ENCODE measurements at regions of chrX and their contacts with region 1.

Region 1: GRCh38 chrX:107118322-107119147 is at the start of gene RBM41:
- DNase-seq: peak; percentile 45 to 88 (median 66)
- ATAC-seq: peak; percentile 99
- H3K4me3 ChIP-seq: peak within 1 kb of the TSS; percentile 77
- H3K4me3 Mint-ChIP-seq: peak within 1 kb of the TSS; percentile 100
- H3K27ac ChIP-seq: peak within 1 kb of the TSS; percentile 54 to 55
- H3K27ac Mint-ChIP-seq: peak within 1 kb of the TSS; percentile 91
- H3K4me1 ChIP-seq: no peaks in the 10 kb centered on the region
- H3K4me1 Mint-ChIP-seq: peaks cover 49% of the 10 kb centered on the region
- H3K27me3 ChIP-seq: no peaks in the 10 kb centered on the region
- H3K27me3 Mint-ChIP-seq: no peaks in the 10 kb centered on the region
- CTCF ChIP-seq: no peak
- total RNA-seq, gene RBM41: 5.9 to 8.2 TPM

Region 2: DNA sequence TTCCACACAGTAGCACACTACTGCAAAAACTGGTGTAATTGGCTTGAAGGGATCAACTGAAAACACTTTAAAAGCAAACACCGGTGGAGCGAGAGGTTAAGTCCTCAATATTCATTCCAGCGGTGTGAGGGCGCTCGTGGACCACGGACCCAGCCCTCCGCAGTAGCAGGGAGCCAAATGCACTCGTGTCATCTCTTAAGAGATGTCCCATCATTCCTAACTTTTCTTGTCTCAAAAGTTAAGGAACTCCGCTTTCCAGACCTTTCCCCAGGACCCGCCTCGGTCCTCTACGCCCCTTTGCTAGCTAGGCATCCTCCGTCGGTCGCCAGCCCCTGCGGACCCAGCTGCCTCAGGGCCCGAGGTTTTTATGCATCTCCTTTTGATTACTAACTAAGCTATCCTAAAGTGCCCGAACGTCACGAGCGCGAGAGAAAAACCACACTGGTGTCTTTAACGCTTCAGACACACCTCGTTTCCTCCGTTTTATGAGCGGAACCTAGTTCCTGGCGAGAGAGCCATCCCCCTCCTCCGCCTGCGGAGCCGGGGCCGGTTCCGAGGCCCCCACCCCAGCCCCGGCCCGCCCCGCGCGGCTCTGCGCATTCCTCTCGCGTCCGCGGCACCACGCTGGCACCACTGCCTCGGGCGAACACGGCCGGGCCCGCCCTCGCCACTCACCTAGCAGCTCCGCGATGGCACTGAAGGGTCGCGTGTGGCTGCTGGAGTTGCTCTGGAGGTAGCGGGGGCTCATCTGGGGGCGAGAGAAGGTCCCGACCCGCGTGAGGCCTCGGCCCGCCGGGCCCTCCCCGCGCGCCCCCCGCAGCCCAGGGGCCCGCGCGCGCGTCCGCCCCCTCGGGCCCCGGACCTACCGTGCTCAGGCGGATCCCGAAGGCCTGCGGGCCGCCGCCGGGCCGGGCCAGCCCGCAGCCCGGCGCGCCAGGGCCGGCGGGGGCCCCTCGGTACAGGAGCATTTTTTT is 119.2 kb before region 1 on chrX:
- CTCF ChIA-PET with region 1: interaction called, 3 read pairs
- POLR2A ChIA-PET with region 1: no interaction called
- intact Hi-C with region 1: loop called in 1 of 2 experiments (anchors 2 kb)
- DNase-seq: peak; percentile 5 to 69 (median 36)
- ATAC-seq: peak; percentile 74
- H3K4me3 ChIP-seq: peak overlapping the region; percentile 62
- H3K4me3 Mint-ChIP-seq: peak overlapping the region; percentile 88
- H3K27ac ChIP-seq: no peak overlapping the region
- H3K27ac Mint-ChIP-seq: peak overlapping the region; percentile 73
- H3K4me1 ChIP-seq: peaks cover 8% of the 10 kb centered on the region
- H3K4me1 Mint-ChIP-seq: peaks cover 13% of the 10 kb centered on the region
- H3K27me3 ChIP-seq: no peaks in the 10 kb centered on the region
- H3K27me3 Mint-ChIP-seq: no peaks in the 10 kb centered on the region
- CTCF ChIP-seq: peak; percentile 49

Region 3: GRCh38 chrX:107102975-107103374 is 15.6 kb before region 1 on chrX:
- CTCF ChIA-PET with region 1: no interaction called
- POLR2A ChIA-PET with region 1: no interaction called
- intact Hi-C with region 1: no loop called
- DNase-seq: peak in 1 of 14 experiments; percentile 1
- ATAC-seq: no peak
- H3K4me3 ChIP-seq: no peak overlapping the region
- H3K4me3 Mint-ChIP-seq: no peak overlapping the region
- H3K27ac ChIP-seq: no peak overlapping the region
- H3K27ac Mint-ChIP-seq: no peak overlapping the region
- H3K4me1 ChIP-seq: no peaks in the 10 kb centered on the region
- H3K4me1 Mint-ChIP-seq: peaks cover 20% of the 10 kb centered on the region
- H3K27me3 ChIP-seq: no peaks in the 10 kb centered on the region
- H3K27me3 Mint-ChIP-seq: no peaks in the 10 kb centered on the region
- CTCF ChIP-seq: no peak

Region 4: DNA sequence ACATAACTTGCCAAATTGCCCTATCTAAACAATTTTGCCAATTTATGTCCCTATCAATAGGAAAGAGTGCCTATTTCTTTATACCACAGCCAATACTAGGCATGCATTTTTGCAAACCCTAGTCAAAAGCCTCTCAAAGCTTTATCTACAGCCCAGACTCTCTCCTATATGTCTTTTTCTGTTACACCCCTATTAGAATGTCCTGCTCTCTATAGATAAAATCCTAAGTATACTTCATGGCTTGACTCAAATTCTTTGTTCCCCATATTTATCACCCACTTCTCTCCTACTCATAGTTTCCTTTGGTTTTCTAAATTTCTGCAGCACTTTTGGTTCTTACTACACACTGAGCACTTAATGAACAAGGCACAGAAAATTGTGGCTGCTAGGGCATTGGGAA is 49.7 kb after region 1 on chrX:
- CTCF ChIA-PET with region 1: no interaction called
- POLR2A ChIA-PET with region 1: no interaction called
- intact Hi-C with region 1: loop called in 1 of 2 experiments (anchors 10 kb)
- DNase-seq: no peak
- ATAC-seq: no peak
- H3K4me3 ChIP-seq: no peak overlapping the region
- H3K4me3 Mint-ChIP-seq: no peak overlapping the region
- H3K27ac ChIP-seq: no peak overlapping the region
- H3K27ac Mint-ChIP-seq: no peak overlapping the region
- H3K4me1 ChIP-seq: no peaks in the 10 kb centered on the region
- H3K4me1 Mint-ChIP-seq: no peaks in the 10 kb centered on the region
- H3K27me3 ChIP-seq: no peaks in the 10 kb centered on the region
- H3K27me3 Mint-ChIP-seq: no peaks in the 10 kb centered on the region
- CTCF ChIP-seq: no peak

Region 5: GRCh38 chrX:107205770-107206696 is 87.5 kb after region 1 on chrX and contains the starts of genes DNAAF6 and NUP62CL:
- CTCF ChIA-PET with region 1: no interaction called
- POLR2A ChIA-PET with region 1: no interaction called
- intact Hi-C with region 1: loop called (anchors 5 to 10 kb)
- DNase-seq: peak; percentile 35 to 86 (median 58)
- ATAC-seq: peak; percentile 92
- H3K4me3 ChIP-seq: peak within 1 kb of the TSS; percentile 70
- H3K4me3 Mint-ChIP-seq: peak within 1 kb of the TSS; percentile 88
- H3K27ac ChIP-seq: no peak within 1 kb of the TSS
- H3K27ac Mint-ChIP-seq: peak within 1 kb of the TSS; percentile 30
- H3K4me1 ChIP-seq: peaks cover 9% of the 10 kb centered on the region
- H3K4me1 Mint-ChIP-seq: peaks cover 12% of the 10 kb centered on the region
- H3K27me3 ChIP-seq: no peaks in the 10 kb centered on the region
- H3K27me3 Mint-ChIP-seq: no peaks in the 10 kb centered on the region
- CTCF ChIP-seq: no peak
- total RNA-seq, gene DNAAF6: not detected
- total RNA-seq, gene NUP62CL: 0.74 to 0.81 TPM

Region 6: DNA sequence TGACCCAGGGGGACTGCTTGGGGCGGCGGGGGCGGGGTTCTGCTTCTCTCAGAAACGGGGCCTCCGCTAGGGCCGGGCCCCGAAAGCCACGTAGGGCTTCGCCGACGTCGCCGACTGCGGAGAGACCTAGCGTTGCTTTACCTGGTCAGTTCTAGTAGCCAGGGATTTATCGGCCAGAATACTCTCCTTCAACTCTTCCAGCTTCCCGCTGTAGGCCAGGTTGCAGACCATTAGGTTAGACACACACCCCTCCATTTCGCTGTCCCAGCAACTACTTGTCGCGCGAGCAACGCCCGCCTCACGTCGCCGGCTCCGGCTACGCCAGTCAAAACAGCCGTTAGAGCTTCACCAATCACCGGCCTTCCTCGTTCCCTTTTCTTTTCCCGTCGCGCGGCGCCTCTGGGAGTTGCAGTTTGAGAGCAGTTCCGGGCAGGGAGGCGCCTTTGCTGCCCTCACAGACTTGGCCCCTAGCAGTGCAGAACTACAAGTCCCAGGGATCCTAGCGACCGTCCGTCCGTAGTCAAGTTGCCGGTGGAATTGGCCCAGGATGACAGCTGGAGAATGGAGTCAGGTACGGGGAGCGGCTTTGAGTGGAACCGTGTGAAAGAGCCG is 972.8 kb after region 1 on chrX and contains the starts of genes ATG4A and PSMD10:
- CTCF ChIA-PET with region 1: no interaction called
- POLR2A ChIA-PET with region 1: no interaction called
- intact Hi-C with region 1: loop called (anchors 5 to 10 kb)
- DNase-seq: peak; percentile 75 to 95 (median 84)
- ATAC-seq: peak; percentile 95
- H3K4me3 ChIP-seq: peak within 1 kb of the TSS; percentile 87
- H3K4me3 Mint-ChIP-seq: no peak within 1 kb of the TSS
- H3K27ac ChIP-seq: peak within 1 kb of the TSS; percentile 72 to 87
- H3K27ac Mint-ChIP-seq: no peak within 1 kb of the TSS
- H3K4me1 ChIP-seq: peaks cover 11% of the 10 kb centered on the region
- H3K4me1 Mint-ChIP-seq: peaks cover 8% of the 10 kb centered on the region
- H3K27me3 ChIP-seq: no peaks in the 10 kb centered on the region
- H3K27me3 Mint-ChIP-seq: no peaks in the 10 kb centered on the region
- CTCF ChIP-seq: no peak
- total RNA-seq, gene ATG4A: 2.9 to 4.0 TPM
- total RNA-seq, gene PSMD10: 18.6 to 24.1 TPM

Measured in CD4-positive, alpha-beta T cell (primary cell).